ENCODE measurements at regions of chr7 and their contacts with region 1.

Region 1: GRCh38 chr7:51366930-51367613 is 50.5 kb upstream of the COBL start:
- DNase-seq: no peak
- ATAC-seq: peak; percentile 84 to 98 (median 92)
- H3K4me3 ChIP-seq: no peak overlapping the region
- H3K27ac ChIP-seq: no peak overlapping the region
- H3K4me1 ChIP-seq: no peaks in the 10 kb centered on the region
- H3K27me3 ChIP-seq: no peaks in the 10 kb centered on the region
- CTCF ChIP-seq: peak; percentile 71

Region 2: DNA sequence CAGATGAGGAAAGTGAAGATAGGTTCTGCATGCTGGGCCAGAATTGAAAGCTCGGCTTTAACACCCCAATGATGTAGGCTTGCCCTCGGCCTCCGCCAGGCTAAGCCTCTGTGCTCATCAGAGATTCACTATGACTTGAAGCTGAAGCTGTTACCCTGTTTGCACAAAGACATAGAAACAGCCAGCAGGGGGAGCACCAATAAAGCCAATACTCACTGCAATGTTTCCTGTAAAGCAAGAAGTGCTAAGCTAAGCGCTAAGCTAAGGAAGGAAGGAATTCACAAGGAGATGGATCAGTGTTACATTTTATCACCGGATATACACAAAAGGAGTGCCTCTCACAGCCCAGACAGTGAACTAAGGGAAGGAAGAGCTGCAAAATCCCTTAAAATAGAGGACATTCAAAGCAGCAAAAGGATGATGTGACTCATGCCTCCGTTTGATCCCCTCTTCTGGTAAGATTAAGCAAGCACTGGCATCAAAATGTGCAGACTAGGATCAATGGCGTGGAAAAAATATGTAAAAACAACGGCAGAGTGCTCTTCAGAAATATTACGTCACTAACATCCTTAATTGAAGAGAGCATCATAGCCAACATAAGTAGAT is 204.2 kb before region 1 on chr7:
- intact Hi-C with region 1: loop called (anchors 1 to 5 kb)
- DNase-seq: peak in 1 of 2 donors; percentile 37
- ATAC-seq: peak; percentile 84 to 94 (median 90)
- H3K4me3 ChIP-seq: no peak overlapping the region
- H3K27ac ChIP-seq: no peak overlapping the region
- H3K4me1 ChIP-seq: peaks cover 12% of the 10 kb centered on the region
- H3K27me3 ChIP-seq: no peaks in the 10 kb centered on the region
- CTCF ChIP-seq: peak; percentile 83

Region 3: DNA sequence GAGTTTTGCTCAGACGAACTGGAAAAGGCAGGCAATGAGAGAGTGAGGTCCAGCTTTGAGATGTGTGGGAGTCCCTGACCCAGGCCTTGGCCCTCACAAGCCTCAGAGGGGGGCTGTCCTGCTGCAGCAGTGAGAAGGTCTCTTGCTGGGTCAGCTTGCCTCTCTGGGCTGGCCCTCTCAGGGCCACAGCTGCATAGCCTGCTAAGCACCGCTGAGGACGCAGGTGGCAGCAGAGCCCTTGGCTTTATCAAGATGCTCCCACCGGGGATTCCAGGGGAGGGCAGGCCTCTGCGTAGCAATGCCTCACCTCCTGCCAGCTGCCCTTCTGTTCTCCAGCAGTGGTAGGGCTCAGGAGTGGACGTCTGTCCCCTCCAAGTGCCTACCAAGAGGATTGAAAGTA is 179.1 kb before region 1 on chr7:
- intact Hi-C with region 1: loop called in 1 of 2 experiments (anchors 5 kb)
- DNase-seq: peak; percentile 41 to 75
- ATAC-seq: peak; percentile 74 to 88 (median 84)
- H3K4me3 ChIP-seq: no peak overlapping the region
- H3K27ac ChIP-seq: peak overlapping the region; percentile 50
- H3K4me1 ChIP-seq: peaks cover 15% of the 10 kb centered on the region
- H3K27me3 ChIP-seq: no peaks in the 10 kb centered on the region
- CTCF ChIP-seq: peak; percentile 52

Region 4: GRCh38 chr7:52107355-52107754 is 740.3 kb after region 1 on chr7:
- intact Hi-C with region 1: no loop called
- DNase-seq: no peak
- ATAC-seq: no peak
- H3K4me3 ChIP-seq: no peak overlapping the region
- H3K27ac ChIP-seq: no peak overlapping the region
- H3K4me1 ChIP-seq: no peaks in the 10 kb centered on the region
- H3K27me3 ChIP-seq: no peaks in the 10 kb centered on the region
- CTCF ChIP-seq: no peak

Measured in psoas muscle (tissue), 8 donors.